Right ventricle myocardium inferior (tissue), 1 donor: ENCODE measurements at regions of chr9 and their contacts with region 1.

Region 1: GRCh38 chr9:25453875-25454274 is 224.4 kb downstream of the TUSC1 start:
- DNase-seq: no peak
- ATAC-seq: no peak

Region 2: GRCh38 chr9:25261445-25261844 is 192.4 kb before region 1 on chr9:
- intact Hi-C with region 1: loop called (anchors 5 kb)
- DNase-seq: no peak
- ATAC-seq: no peak

Region 3: DNA sequence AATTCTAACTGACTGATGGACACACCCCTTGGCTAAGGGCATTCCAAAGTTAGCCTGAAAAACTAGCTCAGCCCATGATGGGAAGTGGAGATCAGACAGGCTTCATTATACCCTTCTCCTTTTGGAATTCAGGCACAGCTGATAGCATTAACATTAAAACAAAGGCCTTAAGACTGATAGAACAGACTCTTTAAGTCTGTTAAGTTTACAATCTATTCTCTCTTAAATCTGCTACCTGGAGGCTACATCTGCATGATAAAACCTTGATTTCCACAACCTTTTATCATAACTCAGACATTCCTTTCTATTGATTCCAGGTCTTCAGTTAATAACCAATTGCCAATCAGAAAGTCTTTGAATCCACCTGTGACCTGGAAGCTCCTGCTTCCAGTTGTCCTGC is 57.0 kb before region 1 on chr9:
- intact Hi-C with region 1: no loop called
- DNase-seq: no peak
- ATAC-seq: no peak

Region 4: DNA sequence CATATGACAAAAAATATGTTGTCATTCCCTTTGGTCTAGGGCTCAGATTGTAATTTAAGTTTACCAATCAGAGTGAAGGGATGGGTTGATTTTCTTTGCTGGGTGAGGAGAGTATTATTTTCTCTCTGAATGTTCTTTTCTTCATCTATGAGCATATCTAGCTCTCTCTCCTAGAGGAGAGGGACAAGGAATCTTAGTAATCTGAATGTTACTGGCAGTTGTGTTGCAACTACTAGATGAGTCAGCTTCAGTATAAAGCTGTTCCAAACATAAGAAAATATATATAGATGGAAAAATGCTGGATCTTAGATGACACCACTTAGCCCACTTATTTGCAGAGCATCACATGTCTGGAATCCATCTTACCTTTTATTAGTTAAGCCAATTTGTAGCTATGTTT is 34.9 kb before region 1 on chr9:
- intact Hi-C with region 1: no loop called
- DNase-seq: no peak
- ATAC-seq: no peak